ENCODE measurements at regions of chr19 and their contacts with region 1.

Region 1: DNA sequence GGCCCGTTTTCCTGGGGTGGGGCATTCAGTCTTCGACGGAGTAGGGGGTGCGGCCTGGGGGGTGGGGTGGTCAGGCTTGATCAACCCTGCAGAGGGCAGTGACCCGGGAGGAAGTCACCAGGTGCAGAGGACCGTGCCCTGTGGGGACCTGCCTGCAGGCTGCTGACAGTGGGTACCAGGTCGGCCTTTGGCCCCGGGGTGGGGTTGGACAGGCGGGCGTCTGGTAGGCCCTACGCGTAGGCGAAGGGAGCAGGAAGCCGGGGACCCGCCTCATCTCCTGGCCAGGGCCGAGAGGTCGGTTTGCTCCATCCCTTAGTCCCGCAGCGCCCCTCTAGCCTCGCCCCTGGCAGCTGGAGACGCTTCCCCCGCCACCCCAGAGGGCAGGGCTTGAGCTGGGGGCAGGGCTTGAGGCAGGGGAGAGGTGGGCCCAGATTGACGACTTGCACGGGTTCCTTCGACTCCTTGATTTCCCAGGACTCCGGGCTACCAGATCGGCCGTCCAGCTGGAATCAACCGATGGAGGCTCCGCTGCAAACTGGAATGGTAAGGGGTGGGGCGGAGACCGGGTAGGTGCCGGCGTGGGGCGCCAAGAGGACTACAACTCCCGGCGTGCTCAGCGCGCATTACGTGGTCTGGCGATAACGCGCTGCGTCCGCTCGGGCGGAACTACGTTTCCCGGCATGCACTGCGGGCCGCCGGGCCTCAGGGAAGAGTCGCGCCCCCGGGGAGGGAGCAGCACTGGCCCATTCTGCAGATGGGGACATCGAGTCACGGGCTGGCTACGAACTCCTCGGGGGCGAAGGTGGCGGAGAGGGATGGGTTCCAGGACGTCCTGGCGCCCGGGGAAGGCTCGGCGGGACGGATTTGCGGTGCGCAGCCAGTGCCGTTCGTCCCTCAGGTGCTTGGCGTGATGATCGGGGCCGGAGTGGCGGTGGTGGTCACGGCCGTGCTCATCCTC is at the start of gene PNPLA6:
- DNase-seq: peak; percentile 85 to 95 (median 91)
- ATAC-seq: peak; percentile 91
- H3K4me3 ChIP-seq: peak within 1 kb of the TSS; percentile 99
- H3K4me3 Mint-ChIP-seq: peak within 1 kb of the TSS; percentile 93 to 97 (median 94)
- H3K27ac ChIP-seq: peak within 1 kb of the TSS; percentile 81
- H3K27ac Mint-ChIP-seq: peak within 1 kb of the TSS; percentile 81 to 96 (median 92)
- H3K4me1 ChIP-seq: peaks cover 10 to 17% of the 10 kb centered on the region in 2 donors
- H3K4me1 Mint-ChIP-seq: peaks cover 6 to 26% (median 22%) of the 10 kb centered on the region in 7 donors
- H3K27me3 ChIP-seq: no peaks in the 10 kb centered on the region
- H3K27me3 Mint-ChIP-seq: no peaks in the 10 kb centered on the region
- total RNA-seq, gene PNPLA6: 82.0 to 157 (median 133) TPM

Region 2: GRCh38 chr19:5690125-5690954 is 1845.0 kb before region 1 on chr19 and contains the start of gene RPL36:
- CTCF ChIA-PET with region 1: no interaction called
- POLR2A ChIA-PET with region 1: no interaction called
- intact Hi-C with region 1: loop called in 1 of 2 experiments (anchors 10 kb)
- DNase-seq: peak; percentile 95 to 100 (median 99)
- ATAC-seq: peak; percentile 77
- H3K4me3 ChIP-seq: peak within 1 kb of the TSS; percentile 90
- H3K4me3 Mint-ChIP-seq: peak within 1 kb of the TSS; percentile 90 to 98 (median 94)
- H3K27ac ChIP-seq: peak within 1 kb of the TSS; percentile 85
- H3K27ac Mint-ChIP-seq: peak within 1 kb of the TSS; percentile 89 to 97 (median 93)
- H3K4me1 ChIP-seq: peaks cover 12 to 21% of the 10 kb centered on the region in 2 donors
- H3K4me1 Mint-ChIP-seq: peaks cover 5 to 39% (median 33%) of the 10 kb centered on the region in 7 donors
- H3K27me3 ChIP-seq: no peaks in the 10 kb centered on the region
- H3K27me3 Mint-ChIP-seq: no peaks in the 10 kb centered on the region
- total RNA-seq, gene RPL36: 865 to 1,786 (median 1,037) TPM

Region 3: DNA sequence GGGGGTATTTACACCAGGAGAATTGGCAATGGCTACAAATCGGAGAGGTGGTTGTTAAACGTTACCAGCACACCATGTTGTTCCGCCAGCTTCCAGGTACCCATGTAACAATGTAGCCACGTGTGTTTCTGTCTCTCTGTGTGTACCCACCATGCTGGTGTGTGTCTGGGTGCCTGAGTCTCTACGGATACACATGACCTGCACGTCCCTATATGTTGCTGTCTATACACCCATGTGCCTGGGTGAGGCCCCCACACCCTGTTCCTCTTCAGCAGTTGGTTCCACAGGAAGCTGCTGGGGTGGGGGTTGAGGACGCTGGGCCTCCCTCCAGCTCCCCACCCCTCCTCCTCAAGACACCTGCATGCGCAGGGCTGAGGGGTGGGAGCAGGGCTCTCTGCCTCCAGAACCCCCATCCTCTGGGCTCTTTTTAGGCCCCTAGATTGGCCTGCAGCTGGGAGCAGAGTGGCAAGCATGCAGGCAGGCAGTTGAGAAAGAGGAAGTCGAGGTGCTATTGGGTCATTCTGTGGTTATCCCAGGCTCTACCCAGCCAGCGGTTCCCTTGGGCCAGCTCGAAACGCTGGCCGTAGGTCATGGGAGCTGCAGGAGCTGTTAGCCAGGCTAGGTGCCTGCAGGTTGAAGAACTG is 186.6 kb before region 1 on chr19 and contains the start of gene ARHGEF18:
- CTCF ChIA-PET with region 1: no interaction called
- POLR2A ChIA-PET with region 1: no interaction called
- intact Hi-C with region 1: loop called in 1 of 2 experiments (anchors 2 kb)
- DNase-seq: peak in 8 of 9 donors; percentile 40 to 89 (median 84)
- ATAC-seq: peak; percentile 77
- H3K4me3 ChIP-seq: peak within 1 kb of the TSS; percentile 99
- H3K4me3 Mint-ChIP-seq: peak within 1 kb of the TSS; percentile 83 to 100 (median 99)
- H3K27ac ChIP-seq: peak within 1 kb of the TSS; percentile 74
- H3K27ac Mint-ChIP-seq: peak within 1 kb of the TSS; percentile 86 to 100 (median 98)
- H3K4me1 ChIP-seq: peaks cover 28 to 44% of the 10 kb centered on the region in 2 donors
- H3K4me1 Mint-ChIP-seq: peaks cover 22 to 78% (median 62%) of the 10 kb centered on the region in 7 donors
- H3K27me3 ChIP-seq: no peaks in the 10 kb centered on the region
- H3K27me3 Mint-ChIP-seq: no peaks in the 10 kb centered on the region
- total RNA-seq, gene ARHGEF18: 53.0 to 132 (median 130) TPM

Region 4: DNA sequence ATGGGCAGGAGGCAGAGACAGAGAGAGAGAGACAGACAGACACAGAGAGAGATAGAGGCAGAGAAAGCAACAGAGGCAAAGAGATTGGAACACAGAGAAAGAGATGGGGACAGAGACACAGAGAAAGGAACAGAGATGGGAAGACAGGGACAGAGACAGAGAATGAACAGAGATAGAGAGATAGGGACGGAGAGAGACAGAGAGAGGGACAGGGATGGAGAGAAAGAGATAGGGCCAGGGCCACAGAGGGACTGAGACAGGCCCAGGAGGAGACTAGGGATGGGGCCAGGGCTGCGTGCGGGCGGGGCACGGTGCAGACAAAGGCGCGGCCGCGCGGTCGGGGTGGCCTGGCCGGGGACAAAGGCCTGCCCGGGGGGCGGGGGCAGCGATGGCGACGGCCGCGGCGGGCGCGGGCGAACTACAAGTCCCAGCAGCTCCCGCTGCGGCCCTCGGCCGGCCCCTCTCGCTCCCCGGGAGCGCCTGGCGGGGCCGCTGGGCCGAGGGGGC is 19.6 kb before region 1 on chr19 and contains the start of gene ZNF358:
- CTCF ChIA-PET with region 1: no interaction called
- POLR2A ChIA-PET with region 1: interaction called, 78 read pairs
- intact Hi-C with region 1: loop called in 1 of 2 experiments (anchors 2 kb)
- DNase-seq: peak in 1 of 9 donors; percentile 57
- ATAC-seq: peak; percentile 80
- H3K4me3 ChIP-seq: peak within 1 kb of the TSS; percentile 34
- H3K4me3 Mint-ChIP-seq: peak within 1 kb of the TSS; percentile 77 to 98 (median 85)
- H3K27ac ChIP-seq: no peak within 1 kb of the TSS
- H3K27ac Mint-ChIP-seq: peak within 1 kb of the TSS in 8 of 9 donors; percentile 55 to 89 (median 64)
- H3K4me1 ChIP-seq: peaks cover 0 to 9% of the 10 kb centered on the region in 2 donors
- H3K4me1 Mint-ChIP-seq: peaks cover 7 to 26% (median 17%) of the 10 kb centered on the region in 7 donors
- H3K27me3 ChIP-seq: no peaks in the 10 kb centered on the region
- H3K27me3 Mint-ChIP-seq: peaks cover 0 to 43% (median 10%) of the 10 kb centered on the region in 5 donors
- total RNA-seq, gene ZNF358: 5.7 to 10.1 (median 7.2) TPM

Region 5: DNA sequence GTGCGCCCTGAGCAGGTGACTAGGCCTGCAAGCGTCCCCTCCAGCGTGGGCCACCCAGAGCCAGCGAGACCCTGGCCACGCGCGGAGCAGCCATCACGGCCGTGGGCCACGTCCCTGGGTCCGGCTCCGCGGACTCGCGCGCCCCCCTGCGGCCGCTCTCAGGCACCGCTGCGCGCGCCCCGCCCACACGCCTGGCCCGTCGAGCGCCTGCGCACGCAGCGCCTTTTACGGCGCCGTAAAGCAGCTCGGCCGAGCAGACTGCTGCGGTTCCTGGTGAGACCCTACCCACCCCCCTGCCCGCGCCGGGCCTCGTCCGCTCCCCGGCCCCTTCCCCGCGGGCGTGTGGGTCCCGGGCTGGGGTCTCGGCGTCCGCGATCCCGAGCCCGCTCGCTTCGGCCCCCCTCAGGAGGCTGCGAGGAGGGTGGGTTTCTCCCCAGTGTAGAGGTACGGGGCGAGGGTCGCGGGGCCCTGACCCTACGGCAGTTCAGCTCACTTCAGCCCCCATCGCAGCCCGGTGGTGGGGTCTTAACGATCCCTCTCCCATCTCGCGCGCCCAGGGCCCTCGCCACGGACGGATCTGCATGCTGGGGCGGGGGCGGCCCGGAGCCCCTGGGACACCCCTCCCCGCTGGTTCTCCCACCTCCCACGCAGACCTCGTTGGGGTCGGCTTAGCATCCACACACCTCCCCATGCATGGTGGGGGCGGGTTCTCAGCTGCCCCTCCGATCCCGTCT is 145.5 kb after region 1 on chr19 and contains the start of gene TRAPPC5:
- CTCF ChIA-PET with region 1: no interaction called
- POLR2A ChIA-PET with region 1: no interaction called
- intact Hi-C with region 1: loop called (anchors 1 kb)
- DNase-seq: peak; percentile 80 to 95 (median 89)
- ATAC-seq: peak; percentile 86
- H3K4me3 ChIP-seq: peak within 1 kb of the TSS; percentile 84
- H3K4me3 Mint-ChIP-seq: peak within 1 kb of the TSS; percentile 83 to 96 (median 91)
- H3K27ac ChIP-seq: peak within 1 kb of the TSS; percentile 91
- H3K27ac Mint-ChIP-seq: peak within 1 kb of the TSS; percentile 54 to 95 (median 93)
- H3K4me1 ChIP-seq: peaks cover 26 to 32% of the 10 kb centered on the region in 2 donors
- H3K4me1 Mint-ChIP-seq: peaks cover 20 to 59% (median 46%) of the 10 kb centered on the region in 7 donors
- H3K27me3 ChIP-seq: peaks cover 0 to 6% of the 10 kb centered on the region in 2 donors
- H3K27me3 Mint-ChIP-seq: peaks cover 3 to 22% (median 8%) of the 10 kb centered on the region in 5 donors
- total RNA-seq, gene TRAPPC5: 43.7 to 79.3 (median 75.4) TPM

Region 6: GRCh38 chr19:7919610-7920518 is 384.6 kb after region 1 on chr19 and contains the start of gene SNAPC2:
- CTCF ChIA-PET with region 1: no interaction called
- POLR2A ChIA-PET with region 1: no interaction called
- intact Hi-C with region 1: loop called in 1 of 2 experiments (anchors 1 kb)
- DNase-seq: peak; percentile 95 to 99 (median 98)
- ATAC-seq: peak; percentile 71
- H3K4me3 ChIP-seq: peak within 1 kb of the TSS; percentile 86
- H3K4me3 Mint-ChIP-seq: peak within 1 kb of the TSS; percentile 88 to 97 (median 94)
- H3K27ac ChIP-seq: peak within 1 kb of the TSS; percentile 75
- H3K27ac Mint-ChIP-seq: peak within 1 kb of the TSS; percentile 76 to 97 (median 92)
- H3K4me1 ChIP-seq: peaks cover 25 to 34% of the 10 kb centered on the region in 2 donors
- H3K4me1 Mint-ChIP-seq: peaks cover 15 to 52% (median 38%) of the 10 kb centered on the region in 7 donors
- H3K27me3 ChIP-seq: peaks cover 3 to 20% of the 10 kb centered on the region in 2 donors
- H3K27me3 Mint-ChIP-seq: peaks cover 12 to 33% (median 14%) of the 10 kb centered on the region in 5 donors
- total RNA-seq, gene SNAPC2: 12.3 to 24.4 (median 21.4) TPM